AG04449 (cell line): ENCODE measurements at regions of chr17 and their contacts with region 1.

Region 1: DNA sequence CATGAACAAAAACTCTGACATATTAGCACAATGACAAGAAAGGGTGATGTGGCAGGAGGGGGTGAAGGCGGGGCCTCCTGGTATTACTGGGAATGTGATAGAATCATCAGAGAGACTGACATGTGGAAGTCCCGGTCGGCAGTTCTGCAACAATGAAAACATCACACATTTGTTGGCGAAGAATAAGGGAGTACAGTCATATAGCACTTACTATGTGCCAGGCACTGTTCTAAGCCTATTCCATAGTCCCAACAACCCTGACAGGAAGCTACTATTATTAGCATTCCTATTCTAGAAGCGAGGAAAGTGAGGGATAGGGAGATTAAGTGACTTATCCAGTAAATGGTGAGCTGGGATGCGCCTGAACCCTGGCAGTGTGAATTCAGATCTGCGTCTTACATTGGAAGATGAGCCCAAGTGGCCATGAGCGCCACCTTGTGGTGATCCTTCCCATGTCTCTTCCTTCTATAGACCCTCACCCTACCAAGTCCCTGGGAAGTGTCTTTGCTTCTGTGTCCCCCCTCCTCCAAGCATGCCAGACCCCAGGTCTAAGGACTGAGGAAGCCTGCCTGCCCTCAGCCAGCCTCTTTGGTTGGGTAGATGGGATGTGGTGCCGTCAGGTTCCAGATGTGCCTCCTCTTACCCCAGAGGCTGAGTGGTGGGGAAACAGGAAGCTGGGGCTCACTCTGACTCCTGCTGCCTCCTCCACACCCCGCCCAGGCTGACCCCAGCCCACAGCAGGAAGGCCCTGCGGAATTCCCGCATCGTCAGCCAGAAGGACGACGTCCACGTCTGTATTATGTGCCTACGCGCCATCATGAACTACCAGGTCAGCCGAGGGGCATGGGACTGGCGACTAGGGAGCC is 14.0 kb downstream of the FMNL1 start:
- DNase-seq: peak; percentile 9
- H3K4me3 ChIP-seq: no peak overlapping the region
- CTCF ChIP-seq: peak; percentile 87

Region 2: DNA sequence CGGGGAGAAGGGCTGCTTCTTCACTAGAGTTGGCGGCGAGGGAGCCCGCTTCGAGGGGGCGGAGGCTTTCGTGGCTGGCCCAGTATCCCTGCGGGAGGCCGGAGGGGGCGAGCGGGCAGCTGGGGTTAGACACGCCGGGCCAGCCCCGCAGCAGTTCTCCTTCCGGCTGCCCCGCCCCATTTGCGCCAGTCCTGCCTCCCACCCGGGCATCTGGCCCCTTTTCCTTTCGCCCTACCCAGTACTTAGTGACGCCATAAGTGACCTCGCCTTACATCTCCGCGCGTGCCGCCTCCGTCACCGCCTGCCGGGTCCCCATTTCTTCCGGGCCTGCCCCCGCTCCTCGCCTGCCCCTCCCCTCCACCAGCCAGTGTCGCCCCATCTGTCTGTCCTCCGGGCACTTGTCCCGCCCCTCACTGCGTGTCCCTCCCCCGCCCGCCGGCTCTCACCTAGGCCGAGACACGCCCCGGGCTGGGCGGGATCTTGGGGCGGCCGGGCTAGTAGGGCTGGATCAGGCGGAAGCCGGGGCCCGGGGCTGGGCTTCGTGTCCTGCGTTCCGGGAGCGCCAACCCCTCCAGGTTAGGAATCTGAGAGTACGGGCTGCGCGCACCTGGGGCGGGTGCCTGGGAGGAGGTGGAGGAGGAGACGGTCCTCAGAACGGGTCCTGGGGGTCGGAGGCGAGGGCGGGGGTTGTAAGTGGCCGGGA is 11.9 kb after region 1 on chr17:
- CTCF ChIA-PET with region 1: interaction called, 73 read pairs
- POLR2A ChIA-PET with region 1: no interaction called
- DNase-seq: no peak
- H3K4me3 ChIP-seq: peak overlapping the region; percentile 56
- CTCF ChIP-seq: no peak

Region 3: GRCh38 chr17:45256114-45256966 is 20.7 kb after region 1 on chr17:
- CTCF ChIA-PET with region 1: interaction called, 73 read pairs
- POLR2A ChIA-PET with region 1: no interaction called
- DNase-seq: no peak
- H3K4me3 ChIP-seq: no peak overlapping the region
- CTCF ChIP-seq: peak; percentile 1